Activated CD8-positive, alpha-beta memory T cell treated with anti-CD3 and anti-CD28 coated beads, Interleukin-2, amount 10 ng/mL, durations not matched to agents 7 days and 5 days (primary cell): ENCODE measurements at regions of chr5 and their contacts with region 1.

Region 1: GRCh38 chr5:147188200-147189108 is 46.4 kb upstream of the STK32A start:
- DNase-seq: peak; percentile 52
- ATAC-seq: peak; percentile 63
- H3K4me3 Mint-ChIP-seq: no peak overlapping the region
- H3K27ac Mint-ChIP-seq: no peak overlapping the region
- H3K4me1 Mint-ChIP-seq: peaks cover 2% of the 10 kb centered on the region
- H3K27me3 Mint-ChIP-seq: peaks cover 9% of the 10 kb centered on the region

Region 2: DNA sequence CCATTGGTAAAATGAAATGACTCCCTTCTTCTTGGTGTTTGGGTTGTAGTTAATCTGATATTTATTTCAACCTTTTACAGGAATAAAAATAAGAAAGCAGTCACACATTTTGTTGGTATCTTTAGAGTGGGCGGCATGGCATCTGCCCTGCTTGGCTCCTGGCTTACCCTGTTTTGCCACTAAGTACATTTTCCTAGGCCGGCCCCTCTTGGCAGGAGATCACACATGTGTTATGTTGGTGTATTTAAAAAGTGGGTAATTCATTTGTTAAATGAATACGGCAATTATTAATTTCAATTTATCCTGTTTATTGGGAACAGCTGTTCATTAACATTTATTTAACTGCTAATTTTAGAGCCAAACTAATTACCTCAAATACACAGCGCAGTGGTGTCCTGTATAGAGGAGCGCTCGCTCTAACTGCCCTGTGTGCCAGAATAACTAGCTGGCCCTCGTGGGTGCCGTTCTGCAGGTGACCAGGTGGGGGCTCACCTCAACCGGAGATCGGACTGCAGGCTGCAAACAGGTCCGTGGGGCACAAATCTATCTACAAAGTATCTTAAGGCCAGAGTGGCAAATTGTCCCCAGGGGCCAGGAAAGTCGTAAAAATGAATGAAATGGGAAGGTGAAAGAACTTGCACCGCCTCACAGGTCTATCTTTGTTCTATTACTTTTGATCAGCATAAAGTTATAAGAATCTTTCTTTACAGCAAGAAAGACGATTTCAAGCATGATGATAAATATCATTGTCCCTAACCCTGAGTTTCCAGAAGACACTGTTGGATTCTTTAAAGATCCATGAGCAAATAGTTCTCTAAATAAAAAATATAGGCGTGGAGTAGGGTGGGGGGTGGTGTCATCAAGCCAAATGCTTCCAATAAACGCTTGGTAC is 646.2 kb before region 1 on chr5:
- CTCF ChIA-PET with region 1: interaction called, 33 read pairs
- DNase-seq: peak; percentile 79
- ATAC-seq: peak; percentile 94
- H3K4me3 Mint-ChIP-seq: no peak overlapping the region
- H3K27ac Mint-ChIP-seq: no peak overlapping the region
- H3K4me1 Mint-ChIP-seq: peaks cover 3% of the 10 kb centered on the region
- H3K27me3 Mint-ChIP-seq: peaks cover 5% of the 10 kb centered on the region

Region 3: GRCh38 chr5:146965761-146966659 is 222.4 kb before region 1 on chr5:
- CTCF ChIA-PET with region 1: interaction called, 22 read pairs
- DNase-seq: peak; percentile 60
- ATAC-seq: peak; percentile 83
- H3K4me3 Mint-ChIP-seq: no peak overlapping the region
- H3K27ac Mint-ChIP-seq: no peak overlapping the region
- H3K4me1 Mint-ChIP-seq: no peaks in the 10 kb centered on the region
- H3K27me3 Mint-ChIP-seq: peaks cover 2% of the 10 kb centered on the region

Region 4: DNA sequence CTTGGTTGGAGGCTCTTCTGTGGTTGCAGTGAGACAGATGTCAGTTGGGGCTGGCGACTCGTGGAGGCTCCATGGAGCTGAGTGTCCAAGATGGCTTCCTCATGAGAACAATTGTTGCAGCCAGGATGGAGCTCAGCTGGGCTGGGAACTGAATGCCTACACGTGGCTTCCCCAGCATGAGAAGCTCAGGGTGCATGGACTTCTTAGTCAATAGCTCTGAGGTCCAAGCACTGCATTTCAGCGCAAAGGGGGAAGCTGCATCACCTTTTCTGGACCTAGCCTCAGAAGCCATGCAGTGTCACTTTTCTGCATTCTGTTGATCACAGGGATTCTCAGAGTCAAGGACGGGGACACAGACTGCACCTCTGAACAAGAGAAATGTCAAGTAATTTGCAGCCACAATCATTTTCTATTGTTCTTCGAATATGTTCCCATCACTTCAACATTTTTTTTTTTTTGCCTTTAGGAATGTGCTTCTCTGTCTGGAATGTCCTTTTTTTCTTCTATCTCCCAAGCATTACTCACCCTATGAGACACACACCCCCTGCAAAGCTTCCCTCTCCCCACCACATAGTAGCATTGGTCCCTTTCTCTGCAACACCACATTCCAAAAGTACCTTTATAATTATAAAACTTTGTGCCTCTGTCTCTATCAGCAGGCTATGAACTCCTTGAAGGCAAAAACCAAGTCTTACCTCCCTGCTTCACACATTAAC is 11.2 kb before region 1 on chr5:
- CTCF ChIA-PET with region 1: interaction called, 29 read pairs
- DNase-seq: no peak
- ATAC-seq: no peak
- H3K4me3 Mint-ChIP-seq: no peak overlapping the region
- H3K27ac Mint-ChIP-seq: no peak overlapping the region
- H3K4me1 Mint-ChIP-seq: no peaks in the 10 kb centered on the region
- H3K27me3 Mint-ChIP-seq: peaks cover 17% of the 10 kb centered on the region